CD4-positive, alpha-beta T cell (primary cell): ENCODE measurements at regions of chr16 and their contacts with region 1.

Region 1: DNA sequence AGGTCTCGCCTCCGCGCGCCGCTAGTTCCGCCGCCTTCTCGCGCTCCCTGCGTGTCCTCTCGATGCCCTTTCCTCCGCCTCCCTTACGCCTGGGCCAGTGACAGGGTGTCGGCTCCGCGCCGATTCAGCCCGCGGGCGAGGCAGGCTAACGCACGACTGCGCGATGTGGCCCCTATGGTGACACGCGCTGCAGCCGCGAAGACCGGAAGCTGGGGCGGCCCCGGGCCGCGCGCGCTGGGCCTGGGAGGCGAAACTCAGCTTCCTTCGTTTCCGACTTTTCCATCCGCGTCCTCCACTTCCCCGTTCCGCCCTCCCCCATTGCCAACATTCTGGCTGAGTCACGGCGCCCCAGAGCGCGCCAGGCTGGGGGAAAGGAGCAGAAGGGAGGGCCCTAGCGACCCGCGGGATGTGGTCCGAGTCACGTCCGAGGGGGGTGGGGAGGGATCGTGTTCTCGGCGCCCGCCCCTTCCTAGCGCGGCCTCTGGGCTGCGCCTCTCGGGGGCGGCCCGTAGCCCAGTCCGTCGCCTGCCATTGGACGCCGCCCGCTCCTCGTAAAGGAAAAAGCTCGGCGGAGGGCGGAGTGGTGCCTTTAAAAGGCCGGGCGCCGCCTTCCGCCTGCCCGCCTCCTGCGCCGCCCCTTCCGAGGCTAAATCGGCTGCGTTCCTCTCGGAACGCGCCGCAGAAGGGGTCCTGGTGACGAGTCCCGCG is at the start of gene ALDOA:
- DNase-seq: peak; percentile 85 to 97 (median 93)
- ATAC-seq: peak; percentile 80
- H3K4me3 ChIP-seq: peak within 1 kb of the TSS; percentile 100
- H3K4me3 Mint-ChIP-seq: peak within 1 kb of the TSS; percentile 100
- H3K27ac ChIP-seq: peak within 1 kb of the TSS; percentile 87 to 92
- H3K27ac Mint-ChIP-seq: peak within 1 kb of the TSS; percentile 96
- H3K4me1 ChIP-seq: peaks cover 60% of the 10 kb centered on the region
- H3K4me1 Mint-ChIP-seq: peaks cover 44% of the 10 kb centered on the region
- H3K27me3 ChIP-seq: no peaks in the 10 kb centered on the region
- H3K27me3 Mint-ChIP-seq: no peaks in the 10 kb centered on the region
- CTCF ChIP-seq: no peak
- total RNA-seq, gene ALDOA: 390 to 396 TPM

Region 2: DNA sequence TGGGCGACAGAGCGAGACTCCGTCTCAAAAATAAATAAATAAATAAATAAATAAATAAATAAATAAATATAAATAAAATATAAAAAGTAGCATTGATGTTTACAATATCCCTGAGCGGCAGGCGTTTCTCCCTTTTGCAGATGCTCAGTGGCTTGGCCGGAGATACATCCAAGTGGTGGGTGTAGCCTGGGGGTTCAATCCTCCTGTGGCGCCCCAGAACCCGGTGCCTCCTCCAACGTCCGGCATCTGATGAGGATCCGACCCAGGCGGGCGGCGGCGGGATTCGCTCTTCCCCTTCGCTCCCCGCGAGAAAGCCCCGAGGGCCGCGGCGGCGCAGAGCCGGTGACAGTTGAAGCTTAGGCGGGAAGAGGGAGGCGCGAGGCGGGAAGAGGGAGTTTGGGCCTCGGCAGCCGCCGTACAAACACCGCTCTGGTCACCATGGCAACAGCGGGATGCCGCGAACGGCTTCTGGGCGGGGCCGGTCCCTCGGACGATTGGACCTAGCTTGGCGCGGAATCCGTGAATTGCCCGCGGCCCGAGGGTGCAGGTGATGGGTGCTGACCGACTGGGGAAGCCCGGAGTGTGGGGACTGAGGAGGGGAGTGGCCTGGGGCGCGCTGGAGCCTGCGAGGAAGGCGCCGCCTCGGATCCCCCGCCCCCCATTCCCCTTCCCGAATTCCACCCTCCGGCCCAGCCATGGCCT is 12.5 kb before region 1 on chr16:
- CTCF ChIA-PET with region 1: interaction called, 7 read pairs
- POLR2A ChIA-PET with region 1: interaction called, 27 read pairs
- intact Hi-C with region 1: loop called in 1 of 2 experiments (anchors 1 kb)
- DNase-seq: peak; percentile 78 to 93 (median 86)
- ATAC-seq: peak; percentile 70
- H3K4me3 ChIP-seq: peak overlapping the region; percentile 86
- H3K4me3 Mint-ChIP-seq: peak overlapping the region; percentile 88
- H3K27ac ChIP-seq: no peak overlapping the region
- H3K27ac Mint-ChIP-seq: peak overlapping the region; percentile 64
- H3K4me1 ChIP-seq: peaks cover 24% of the 10 kb centered on the region
- H3K4me1 Mint-ChIP-seq: peaks cover 22% of the 10 kb centered on the region
- H3K27me3 ChIP-seq: no peaks in the 10 kb centered on the region
- H3K27me3 Mint-ChIP-seq: no peaks in the 10 kb centered on the region
- CTCF ChIP-seq: no peak

Region 3: DNA sequence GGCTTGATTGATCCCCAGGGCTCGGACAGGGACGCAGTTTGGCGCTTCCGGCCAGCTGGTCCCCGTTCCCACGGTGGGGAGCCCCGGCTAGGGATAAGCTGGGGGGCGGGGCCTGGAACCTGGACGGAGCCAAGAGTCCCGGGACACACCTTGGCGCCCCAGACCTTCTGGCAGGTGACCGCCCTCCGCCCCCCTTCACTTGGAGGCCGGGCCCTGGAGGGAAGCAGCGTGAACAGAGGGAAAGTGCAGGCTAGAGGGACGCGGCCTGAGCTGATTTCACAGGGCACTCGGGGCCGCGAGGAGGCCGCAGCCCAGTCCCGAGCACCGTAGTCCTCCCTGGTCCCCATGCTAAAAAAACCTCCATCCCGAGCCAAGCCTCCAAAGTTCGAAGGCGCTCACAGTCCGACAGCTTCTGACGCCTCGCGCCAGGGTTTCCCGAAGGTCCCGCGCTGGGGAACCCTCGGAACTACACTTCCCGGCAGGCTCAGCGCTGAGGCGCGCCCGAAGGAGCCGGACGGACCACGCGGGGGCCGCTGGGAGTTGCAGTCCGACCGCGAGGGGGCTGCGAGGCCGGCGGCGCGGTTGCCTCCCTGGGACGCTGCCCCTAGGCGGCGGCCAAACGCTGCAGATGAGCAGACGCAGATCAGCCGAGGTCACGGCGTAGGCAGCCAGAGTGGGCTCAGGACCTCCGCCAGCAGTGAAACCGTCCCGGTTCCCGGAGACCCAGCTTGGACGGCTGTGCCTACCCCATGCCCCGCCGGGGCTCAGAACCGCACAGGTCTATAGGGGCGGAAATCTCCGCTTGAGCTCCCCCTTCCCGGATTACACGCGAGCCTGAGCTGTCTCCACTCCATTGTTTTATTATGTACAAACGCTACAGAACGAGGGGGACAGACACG is 26.4 kb after region 1 on chr16 and contains the start of gene TBX6:
- CTCF ChIA-PET with region 1: interaction called, 26 read pairs
- POLR2A ChIA-PET with region 1: interaction called, 118 read pairs
- intact Hi-C with region 1: loop called in 1 of 2 experiments (anchors 1 kb)
- DNase-seq: peak; percentile 85 to 96 (median 91)
- ATAC-seq: peak; percentile 80
- H3K4me3 ChIP-seq: peak within 1 kb of the TSS; percentile 67
- H3K4me3 Mint-ChIP-seq: peak within 1 kb of the TSS; percentile 88
- H3K27ac ChIP-seq: peak within 1 kb of the TSS; percentile 58 to 81
- H3K27ac Mint-ChIP-seq: peak within 1 kb of the TSS; percentile 95
- H3K4me1 ChIP-seq: peaks cover 72% of the 10 kb centered on the region
- H3K4me1 Mint-ChIP-seq: peaks cover 53% of the 10 kb centered on the region
- H3K27me3 ChIP-seq: no peaks in the 10 kb centered on the region
- H3K27me3 Mint-ChIP-seq: no peaks in the 10 kb centered on the region
- CTCF ChIP-seq: peak; percentile 78
- total RNA-seq, gene TBX6: 0.42 to 0.47 TPM

Region 4: GRCh38 chr16:30122604-30123160 is 57.4 kb after region 1 on chr16:
- CTCF ChIA-PET with region 1: no interaction called
- POLR2A ChIA-PET with region 1: interaction called, 4 read pairs
- intact Hi-C with region 1: loop called (anchors 2 to 10 kb)
- DNase-seq: peak in 5 of 14 experiments; percentile 4 to 39 (median 26)
- ATAC-seq: peak; percentile 16
- H3K4me3 ChIP-seq: peak overlapping the region; percentile 92
- H3K4me3 Mint-ChIP-seq: peak overlapping the region; percentile 91
- H3K27ac ChIP-seq: peak overlapping the region; percentile 37 to 59
- H3K27ac Mint-ChIP-seq: peak overlapping the region; percentile 81
- H3K4me1 ChIP-seq: peaks cover 33% of the 10 kb centered on the region
- H3K4me1 Mint-ChIP-seq: peaks cover 28% of the 10 kb centered on the region
- H3K27me3 ChIP-seq: no peaks in the 10 kb centered on the region
- H3K27me3 Mint-ChIP-seq: no peaks in the 10 kb centered on the region
- CTCF ChIP-seq: no peak

Region 5: GRCh38 chr16:30370444-30371247 is 305.3 kb after region 1 on chr16 and contains the start of gene TBC1D10B:
- CTCF ChIA-PET with region 1: interaction called, 3 read pairs
- POLR2A ChIA-PET with region 1: interaction called, 17 read pairs
- intact Hi-C with region 1: no loop called
- DNase-seq: peak; percentile 97 to 100 (median 99)
- ATAC-seq: peak; percentile 84
- H3K4me3 ChIP-seq: peak within 1 kb of the TSS; percentile 77
- H3K4me3 Mint-ChIP-seq: peak within 1 kb of the TSS; percentile 93
- H3K27ac ChIP-seq: peak within 1 kb of the TSS; percentile 59 to 78
- H3K27ac Mint-ChIP-seq: peak within 1 kb of the TSS; percentile 82
- H3K4me1 ChIP-seq: peaks cover 49% of the 10 kb centered on the region
- H3K4me1 Mint-ChIP-seq: peaks cover 51% of the 10 kb centered on the region
- H3K27me3 ChIP-seq: no peaks in the 10 kb centered on the region
- H3K27me3 Mint-ChIP-seq: no peaks in the 10 kb centered on the region
- CTCF ChIP-seq: peak; percentile 27
- total RNA-seq, gene TBC1D10B: 12.7 to 14.7 TPM

Region 6: GRCh38 chr16:30407102-30407803 is 342.0 kb after region 1 on chr16 and contains the start of gene ZNF771:
- CTCF ChIA-PET with region 1: interaction called, 3 read pairs
- POLR2A ChIA-PET with region 1: interaction called, 3 read pairs
- intact Hi-C with region 1: loop called (anchors 10 kb)
- DNase-seq: peak; percentile 68 to 96 (median 86)
- ATAC-seq: peak; percentile 71
- H3K4me3 ChIP-seq: peak within 1 kb of the TSS; percentile 69
- H3K4me3 Mint-ChIP-seq: peak within 1 kb of the TSS; percentile 97
- H3K27ac ChIP-seq: peak within 1 kb of the TSS; percentile 66 to 67
- H3K27ac Mint-ChIP-seq: peak within 1 kb of the TSS; percentile 79
- H3K4me1 ChIP-seq: peaks cover 31% of the 10 kb centered on the region
- H3K4me1 Mint-ChIP-seq: peaks cover 21% of the 10 kb centered on the region
- H3K27me3 ChIP-seq: no peaks in the 10 kb centered on the region
- H3K27me3 Mint-ChIP-seq: no peaks in the 10 kb centered on the region
- CTCF ChIP-seq: no peak
- total RNA-seq, gene ZNF771: 0.80 to 1.2 TPM